ENCODE measurements at regions of chr19 and their contacts with region 1.

Region 1: GRCh38 chr19:1672038-1672768 is 19.8 kb upstream of the TCF3 start:
- DNase-seq: peak; percentile 26 to 70
- H3K4me3 ChIP-seq: peak overlapping the region; percentile 28
- H3K4me1 ChIP-seq: peaks cover 12% of the 10 kb centered on the region
- H3K27me3 ChIP-seq: peaks cover 23% of the 10 kb centered on the region

Region 2: DNA sequence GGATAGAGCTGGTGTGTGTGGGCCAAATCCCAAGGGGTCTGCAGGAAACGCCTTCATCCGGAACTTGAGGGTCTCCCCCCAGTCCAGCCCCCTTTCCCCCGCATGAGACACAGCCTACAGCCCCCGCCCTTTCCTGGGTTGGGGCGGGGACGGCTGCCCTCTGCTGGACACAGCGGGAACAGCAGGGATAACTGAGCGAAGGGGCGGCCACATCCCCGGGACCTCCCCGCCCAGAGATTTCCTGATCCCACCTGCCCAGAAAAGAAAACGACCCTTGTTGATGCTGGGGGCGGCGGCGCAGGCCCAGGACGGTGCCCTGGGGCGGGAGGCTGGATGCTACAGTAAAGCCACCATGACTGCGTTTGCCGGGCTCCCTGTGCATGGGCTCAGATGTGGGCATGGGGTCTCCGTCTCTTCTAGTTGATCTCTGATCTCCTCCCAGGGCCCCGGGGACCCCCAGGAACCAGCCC is 95.3 kb after region 1 on chr19:
- in situ Hi-C with region 1: loop called (anchors 10 kb)
- DNase-seq: peak in 1 of 2 experiments; percentile 80
- H3K4me3 ChIP-seq: no peak overlapping the region
- H3K4me1 ChIP-seq: no peaks in the 10 kb centered on the region
- H3K27me3 ChIP-seq: peaks cover 52% of the 10 kb centered on the region

Region 3: GRCh38 chr19:1799695-1800342 is 127.6 kb after region 1 on chr19:
- in situ Hi-C with region 1: no loop called
- DNase-seq: no peak
- H3K4me3 ChIP-seq: no peak overlapping the region
- H3K4me1 ChIP-seq: peaks cover 7% of the 10 kb centered on the region
- H3K27me3 ChIP-seq: no peaks in the 10 kb centered on the region